ENCODE measurements at regions of chr1 and their contacts with region 1.

Region 1: GRCh38 chr1:58515794-58516401 is 30.6 kb downstream of the OMA1 start:
- DNase-seq: peak; percentile 25
- ATAC-seq: peak; percentile 63 to 64

Region 2: DNA sequence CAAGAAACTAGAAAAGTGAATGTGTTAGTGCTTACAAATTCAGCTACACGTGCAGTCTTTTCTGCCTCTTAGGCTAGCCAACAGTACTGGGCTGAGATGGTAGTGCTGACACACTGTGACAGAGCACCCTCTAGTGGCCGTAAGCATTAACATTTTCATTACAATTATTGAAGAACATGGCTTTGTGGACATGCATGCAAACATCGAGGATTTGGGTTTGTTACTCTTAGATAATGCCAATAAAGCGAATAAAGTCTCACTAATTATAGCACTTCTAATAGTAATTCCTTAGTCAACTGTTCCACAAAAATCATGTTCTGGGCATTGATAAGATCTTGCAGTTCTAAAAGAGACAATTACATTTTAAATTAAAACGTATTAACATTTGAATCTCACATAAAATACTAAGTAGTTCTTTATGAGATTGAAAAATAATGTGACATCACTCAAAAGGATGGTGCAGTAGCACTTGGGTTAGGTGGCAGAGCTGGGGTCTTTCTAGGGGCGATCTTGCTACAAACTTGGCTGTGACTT is 136.8 kb after region 1 on chr1:
- intact Hi-C with region 1: loop called (anchors 2 to 5 kb)
- DNase-seq: peak; percentile 45
- ATAC-seq: peak; percentile 89 to 90

Region 3: DNA sequence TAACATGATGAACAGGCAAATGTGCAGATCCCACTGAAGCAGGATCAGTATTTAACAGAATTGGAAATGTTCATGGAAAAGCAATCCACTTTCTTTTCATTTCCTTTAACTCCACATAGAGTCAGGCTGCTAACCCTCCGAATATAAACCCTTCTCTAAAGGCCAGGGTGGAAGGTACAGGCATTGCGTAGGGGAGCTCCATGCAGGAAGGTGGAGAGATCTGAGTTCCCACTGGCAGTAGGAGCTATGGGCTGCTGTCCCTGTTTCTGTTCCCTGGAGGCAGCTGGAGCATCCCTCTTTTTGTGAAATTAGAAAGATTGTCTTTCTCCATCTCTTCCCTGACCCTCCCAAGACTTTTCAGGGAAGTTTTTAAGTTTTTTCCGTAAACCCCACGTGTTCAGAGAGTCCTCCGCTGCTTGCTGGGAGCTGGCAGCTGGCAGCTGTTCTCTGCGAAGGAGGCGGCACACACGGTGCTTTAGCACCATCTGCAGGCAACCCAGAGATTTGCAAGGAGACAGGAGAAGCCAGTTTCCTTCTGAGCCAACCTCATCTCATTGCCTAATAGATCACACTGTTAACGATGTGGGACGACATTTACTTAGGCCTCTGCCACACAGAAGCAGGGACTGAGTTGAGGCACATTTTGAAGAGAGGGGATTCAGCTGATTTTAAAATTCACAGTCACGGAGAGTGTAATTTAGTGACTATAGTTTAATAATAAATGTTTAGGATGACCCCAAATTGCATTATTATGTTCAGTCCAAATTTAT is 1243.4 kb after region 1 on chr1:
- intact Hi-C with region 1: loop called in 1 of 2 experiments (anchors 10 kb)
- DNase-seq: peak; percentile 83
- ATAC-seq: peak; percentile 95 to 96

Measured in left cardiac atrium (tissue), 4 donors.